ENCODE measurements at regions of chr12 and their contacts with region 1.

Region 1: GRCh38 chr12:6851921-6852650 is at the start of gene USP5:
- DNase-seq: peak; percentile 100
- ATAC-seq: peak; percentile 84
- H3K4me3 ChIP-seq: peak within 1 kb of the TSS; percentile 63
- H3K27ac ChIP-seq: peak within 1 kb of the TSS; percentile 87
- H3K4me1 ChIP-seq: peaks cover 5% of the 10 kb centered on the region
- H3K27me3 ChIP-seq: no peaks in the 10 kb centered on the region
- CTCF ChIP-seq: no peak
- POLR2A ChIP-seq: no peak
- RAD21 ChIP-seq: no peak
- total RNA-seq, gene USP5: 119 and 125 TPM in 2 replicates

Region 2: DNA sequence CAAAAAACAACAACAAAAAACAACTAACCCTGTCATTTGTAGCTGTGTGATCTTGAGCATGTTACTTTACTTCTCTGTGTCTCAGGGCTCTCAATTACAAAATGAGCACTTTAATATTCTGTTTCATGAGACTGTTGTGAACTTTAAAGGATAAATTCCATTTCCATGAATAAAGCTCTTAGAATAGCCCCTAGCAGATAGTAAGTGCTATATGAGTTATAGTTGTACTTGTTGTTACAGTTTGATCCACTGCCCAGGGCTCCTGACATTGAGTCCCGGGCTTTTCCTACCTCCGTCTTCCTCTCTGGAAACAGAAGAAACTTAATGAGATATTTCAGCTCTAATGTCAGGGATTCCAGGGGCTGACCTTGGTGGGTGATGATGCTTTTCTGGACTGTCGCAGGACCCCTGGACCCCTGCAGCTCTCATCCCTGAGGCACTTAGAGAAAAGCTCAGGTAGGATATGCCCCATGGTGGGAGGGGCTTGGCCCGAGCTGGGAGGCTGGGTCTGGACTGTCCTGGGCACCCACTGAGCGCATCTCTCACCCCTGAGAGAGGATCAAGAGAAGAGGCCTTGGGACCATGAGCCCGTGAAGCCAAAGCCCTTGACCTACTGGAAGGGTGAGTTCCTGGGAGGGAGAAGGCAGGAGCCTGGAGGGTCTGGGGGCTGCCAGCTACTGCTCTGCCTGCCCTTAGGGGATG is 18.7 kb before region 1 on chr12:
- CTCF ChIA-PET with region 1: interaction called, 11 read pairs
- POLR2A ChIA-PET with region 1: interaction called, 5 read pairs
- dilution Hi-C with region 1: no loop called
- in situ Hi-C with region 1: no loop called
- intact Hi-C with region 1: no loop called
- DNase-seq: peak; percentile 30
- ATAC-seq: no peak
- H3K4me3 ChIP-seq: no peak overlapping the region
- H3K27ac ChIP-seq: no peak overlapping the region
- H3K4me1 ChIP-seq: peaks cover 7% of the 10 kb centered on the region
- H3K27me3 ChIP-seq: no peaks in the 10 kb centered on the region
- CTCF ChIP-seq: no peak
- POLR2A ChIP-seq: no peak
- RAD21 ChIP-seq: no peak

Region 3: DNA sequence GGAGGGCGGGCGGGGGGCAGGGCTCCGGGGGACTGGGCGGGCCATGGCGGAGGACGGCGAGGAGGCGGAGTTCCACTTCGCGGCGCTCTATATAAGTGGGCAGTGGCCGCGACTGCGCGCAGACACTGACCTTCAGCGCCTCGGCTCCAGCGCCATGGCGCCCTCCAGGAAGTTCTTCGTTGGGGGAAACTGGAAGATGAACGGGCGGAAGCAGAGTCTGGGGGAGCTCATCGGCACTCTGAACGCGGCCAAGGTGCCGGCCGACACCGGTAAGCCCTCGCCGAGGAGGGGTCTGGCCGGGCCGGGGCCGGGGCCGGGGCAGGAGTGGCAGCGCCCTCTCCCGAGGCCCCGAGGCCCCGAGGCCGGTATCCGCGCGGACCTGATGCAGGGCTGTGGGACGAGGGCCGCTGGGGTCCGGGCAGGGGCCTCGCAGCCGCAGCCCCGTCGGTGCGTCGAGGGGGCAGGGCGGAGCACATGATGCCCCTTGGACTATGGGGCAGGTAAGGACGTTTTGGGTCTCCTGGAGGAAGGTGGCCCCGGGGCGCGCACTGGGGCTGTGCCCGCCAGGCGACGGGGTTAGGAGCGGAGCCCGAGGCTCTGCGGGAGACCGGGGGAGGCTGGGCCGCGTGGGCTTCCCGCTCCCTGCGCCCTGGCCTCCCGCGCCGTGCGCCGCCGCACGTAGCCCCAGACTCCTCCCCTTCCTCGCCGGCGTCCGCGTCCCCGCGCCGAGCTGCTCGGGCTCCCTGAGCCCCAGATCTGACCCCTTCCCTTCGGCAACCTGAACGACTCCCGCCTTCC is 15.5 kb after region 1 on chr12 and contains the start of gene TPI1:
- CTCF ChIA-PET with region 1: interaction called, 10 read pairs
- POLR2A ChIA-PET with region 1: interaction called, 6 read pairs
- dilution Hi-C with region 1: no loop called
- in situ Hi-C with region 1: no loop called
- intact Hi-C with region 1: loop called (anchors 2 kb)
- DNase-seq: peak; percentile 74
- ATAC-seq: peak; percentile 82
- H3K4me3 ChIP-seq: peak within 1 kb of the TSS; percentile 87
- H3K27ac ChIP-seq: peak within 1 kb of the TSS; percentile 97
- H3K4me1 ChIP-seq: peaks cover 19% of the 10 kb centered on the region
- H3K27me3 ChIP-seq: no peaks in the 10 kb centered on the region
- CTCF ChIP-seq: no peak
- POLR2A ChIP-seq: peak; percentile 99
- RAD21 ChIP-seq: no peak
- total RNA-seq, gene TPI1: 1,842 and 2,176 TPM in 2 replicates